ENCODE measurements at regions of chr19 and their contacts with region 1.

Region 1: DNA sequence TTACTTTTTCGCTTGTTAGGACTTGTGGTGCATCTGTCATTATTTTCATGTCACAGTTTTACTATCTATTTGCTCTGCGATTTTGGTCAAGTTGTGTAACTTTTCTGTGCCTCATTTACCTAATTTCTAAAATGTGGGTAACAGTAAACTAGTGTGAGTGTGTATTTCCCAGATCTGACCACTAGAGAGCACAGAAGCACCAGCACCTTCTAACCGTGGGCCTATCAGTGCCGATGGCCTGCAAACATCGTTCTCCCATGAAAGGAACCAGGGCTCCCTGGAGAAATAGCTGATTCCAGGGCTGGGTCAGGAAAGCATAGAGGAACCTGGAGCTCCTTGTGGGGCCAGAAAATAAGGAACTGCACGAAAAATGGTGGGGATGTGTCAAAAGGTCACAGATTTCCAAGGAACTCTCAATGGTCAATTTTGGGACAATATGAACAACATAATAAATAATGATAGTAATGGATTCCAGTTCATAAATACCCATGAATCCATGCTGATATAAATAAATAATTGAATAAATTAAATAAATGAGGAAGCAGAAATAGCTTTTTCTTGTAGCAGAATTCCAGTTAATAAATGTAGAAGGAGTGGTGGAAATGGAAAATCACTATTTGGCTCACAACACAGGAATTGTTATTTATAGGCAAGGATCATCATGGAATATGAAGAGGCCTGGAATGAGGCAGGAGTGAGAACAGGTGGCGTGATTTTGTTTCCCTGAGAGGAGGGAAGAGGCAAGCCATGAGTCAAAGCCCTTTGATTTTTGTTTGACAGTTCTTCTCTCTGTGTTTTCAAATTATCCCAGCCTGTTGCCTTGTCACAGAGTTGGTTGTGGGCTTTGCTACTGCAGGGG is 31.1 kb downstream of the CEACAM8 start:
- DNase-seq: peak in 5 of 10 donors; percentile 27 to 48 (median 40)

Region 2: DNA sequence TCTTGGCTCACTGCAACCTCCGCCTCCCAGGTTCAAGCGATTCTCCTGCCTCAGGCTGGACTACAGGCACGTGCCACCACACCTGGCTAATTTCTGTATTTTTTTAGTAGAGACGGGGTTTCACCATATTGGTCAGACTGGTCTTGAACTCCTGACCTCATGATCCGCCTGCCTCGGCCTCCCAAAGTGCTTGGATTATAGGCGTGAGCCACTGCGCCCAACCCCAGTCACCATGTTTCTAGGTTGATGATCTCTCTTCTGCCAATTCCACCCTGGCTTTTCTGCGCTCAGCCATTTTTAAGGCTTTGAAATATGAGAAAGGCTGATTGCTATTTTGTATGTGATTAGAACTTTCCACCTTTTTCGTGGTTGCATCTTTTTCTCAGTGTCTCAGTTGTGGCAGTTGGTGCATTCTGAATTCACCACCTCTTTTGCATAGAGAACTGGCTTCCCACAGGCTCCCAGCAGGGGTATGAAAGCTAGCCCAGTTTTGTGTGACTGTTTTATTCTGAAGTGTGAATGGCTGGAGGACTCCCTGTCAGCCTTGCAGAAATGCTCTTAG is 50.8 kb before region 1 on chr19:
- intact Hi-C with region 1: no loop called
- DNase-seq: no peak

Region 3: DNA sequence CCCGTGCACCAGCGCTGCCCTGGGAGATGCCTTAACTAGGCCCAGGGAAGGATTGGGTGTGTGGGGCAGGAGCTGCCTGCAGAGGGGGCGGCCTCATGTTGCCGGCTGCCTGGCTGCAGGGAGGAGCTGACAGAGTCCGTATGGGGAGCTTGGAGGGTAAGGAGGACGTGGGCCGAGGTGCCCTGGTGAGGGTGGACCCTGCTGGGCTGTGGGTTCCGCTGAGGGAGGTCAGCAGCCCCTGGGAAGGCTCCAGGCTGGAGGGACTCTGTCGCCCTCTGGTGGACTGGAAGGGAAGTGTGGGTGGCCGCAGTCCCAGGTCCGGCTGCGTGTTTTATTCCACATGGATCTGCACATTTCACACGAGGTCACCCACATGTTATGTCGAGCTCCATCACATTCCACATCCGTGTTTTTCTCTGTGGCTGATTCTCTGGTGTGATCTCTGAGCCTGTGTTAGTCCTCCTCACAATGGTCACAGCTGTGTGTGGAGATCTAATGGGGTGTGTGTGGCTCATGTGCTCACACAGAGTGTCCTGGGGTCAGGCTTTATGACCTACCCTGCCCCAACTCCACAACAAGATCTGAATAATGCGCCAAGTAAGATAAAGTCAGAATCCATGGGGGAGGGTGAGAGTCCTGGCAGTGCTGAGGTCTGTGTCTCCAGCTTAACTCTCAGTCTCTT is 33.0 kb after region 1 on chr19:
- intact Hi-C with region 1: loop called (anchors 2 kb)
- DNase-seq: peak in 6 of 10 donors; percentile 14 to 86 (median 58)